PC-3 (cell line): ENCODE measurements at regions of chr1 and their contacts with region 1.

Region 1: GRCh38 chr1:233078396-233078795 is 128.0 kb downstream of the NTPCR start:
- DNase-seq: no peak
- ATAC-seq: no peak
- H3K4me3 ChIP-seq: no peak overlapping the region
- H3K27ac ChIP-seq: no peak overlapping the region
- H3K4me1 ChIP-seq: peaks cover 46% of the 10 kb centered on the region
- H3K27me3 ChIP-seq: no peaks in the 10 kb centered on the region
- CTCF ChIP-seq: no peak

Region 2: GRCh38 chr1:232868793-232869491 is 209.5 kb before region 1 on chr1:
- CTCF ChIA-PET with region 1: no interaction called
- POLR2A ChIA-PET with region 1: no interaction called
- intact Hi-C with region 1: loop called (anchors 1 kb)
- DNase-seq: peak; percentile 97
- ATAC-seq: peak; percentile 81
- H3K4me3 ChIP-seq: no peak overlapping the region
- H3K27ac ChIP-seq: peak overlapping the region; percentile 80
- H3K4me1 ChIP-seq: peaks cover 31% of the 10 kb centered on the region
- H3K27me3 ChIP-seq: no peaks in the 10 kb centered on the region
- CTCF ChIP-seq: no peak

Region 3: GRCh38 chr1:233015965-233016364 is 62.4 kb before region 1 on chr1:
- CTCF ChIA-PET with region 1: no interaction called
- POLR2A ChIA-PET with region 1: no interaction called
- intact Hi-C with region 1: no loop called
- DNase-seq: no peak
- ATAC-seq: no peak
- H3K4me3 ChIP-seq: no peak overlapping the region
- H3K27ac ChIP-seq: no peak overlapping the region
- H3K4me1 ChIP-seq: no peaks in the 10 kb centered on the region
- H3K27me3 ChIP-seq: no peaks in the 10 kb centered on the region
- CTCF ChIP-seq: no peak

Region 4: GRCh38 chr1:233157245-233157644 is 78.8 kb after region 1 on chr1:
- CTCF ChIA-PET with region 1: no interaction called
- POLR2A ChIA-PET with region 1: no interaction called
- intact Hi-C with region 1: loop called (anchors 5 kb)
- DNase-seq: no peak
- ATAC-seq: no peak
- H3K4me3 ChIP-seq: no peak overlapping the region
- H3K27ac ChIP-seq: no peak overlapping the region
- H3K4me1 ChIP-seq: peaks cover 19% of the 10 kb centered on the region
- H3K27me3 ChIP-seq: no peaks in the 10 kb centered on the region
- CTCF ChIP-seq: no peak